Activated T-helper 1 cell treated with anti-CD3 and anti-CD28 coated beads, Interleukin-12 subunit alpha, Interleukin-12 subunit beta, Interleukin-2, Interleukin-4 antibody, amounts not matched to agents 30 ng/mL and 10 ng/mL and 1 ng/mL, durations not matched to agents 14 hours and 24 hours and 36 hours (primary cell): ENCODE measurements at regions of chr3 and their contacts with region 1.

Region 1: DNA sequence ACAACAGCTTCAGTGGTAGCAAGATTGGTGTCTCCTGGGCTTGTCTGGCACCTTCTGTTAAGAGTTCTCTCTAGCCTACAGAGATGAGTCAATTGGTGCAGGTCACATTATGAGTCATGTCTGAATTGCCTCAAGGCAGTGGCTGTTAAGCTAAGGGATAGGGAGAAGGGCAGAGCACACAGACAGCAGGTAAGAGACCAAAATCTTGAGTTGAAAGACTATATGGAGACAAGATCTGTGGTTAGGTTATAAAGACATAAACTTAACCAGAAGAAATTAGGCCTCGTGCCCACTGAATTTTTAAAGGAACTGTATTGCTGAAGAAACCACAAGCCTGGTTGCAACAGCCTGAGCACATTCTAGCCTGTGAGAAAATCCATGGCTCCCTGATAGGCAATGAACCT is 19.2 kb upstream of the KPNA1 start:
- DNase-seq: peak; percentile 46
- H3K4me3 Mint-ChIP-seq: no peak overlapping the region
- H3K27ac Mint-ChIP-seq: peak overlapping the region; percentile 80
- H3K4me1 Mint-ChIP-seq: peaks cover 60% of the 10 kb centered on the region
- H3K27me3 Mint-ChIP-seq: no peaks in the 10 kb centered on the region

Region 2: DNA sequence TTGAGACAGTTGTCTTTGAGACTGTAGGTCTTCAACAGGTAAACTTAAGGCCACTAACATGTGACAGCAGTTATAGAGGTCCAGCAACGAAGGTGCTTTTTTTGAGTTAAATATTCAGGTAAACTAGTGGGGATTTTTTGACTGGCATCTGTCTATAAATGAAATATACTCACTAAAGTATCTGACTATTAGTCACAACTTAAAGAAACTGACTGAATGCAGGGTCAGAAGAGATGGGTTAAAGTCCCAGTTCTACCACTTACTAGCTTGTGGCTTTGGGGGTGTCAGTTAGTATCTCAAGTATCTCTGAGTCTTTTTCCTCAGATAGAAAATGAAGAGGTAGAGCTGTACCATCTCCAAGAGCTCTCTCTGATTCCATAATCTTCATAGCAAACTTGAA is 168.9 kb before region 1 on chr3:
- intact Hi-C with region 1: loop called (anchors 1 kb)
- DNase-seq: no peak
- H3K4me3 Mint-ChIP-seq: peak overlapping the region; percentile 42
- H3K27ac Mint-ChIP-seq: peak overlapping the region; percentile 91
- H3K4me1 Mint-ChIP-seq: peaks cover 47% of the 10 kb centered on the region
- H3K27me3 Mint-ChIP-seq: no peaks in the 10 kb centered on the region

Region 3: GRCh38 chr3:122392868-122393844 is 140.8 kb before region 1 on chr3:
- intact Hi-C with region 1: loop called (anchors 1 kb)
- DNase-seq: no peak
- H3K4me3 Mint-ChIP-seq: no peak overlapping the region
- H3K27ac Mint-ChIP-seq: no peak overlapping the region
- H3K4me1 Mint-ChIP-seq: peaks cover 46% of the 10 kb centered on the region
- H3K27me3 Mint-ChIP-seq: no peaks in the 10 kb centered on the region

Region 4: GRCh38 chr3:122458992-122459391 is 74.9 kb before region 1 on chr3:
- intact Hi-C with region 1: loop called (anchors 1 kb)
- DNase-seq: no peak
- H3K4me3 Mint-ChIP-seq: no peak overlapping the region
- H3K27ac Mint-ChIP-seq: no peak overlapping the region
- H3K4me1 Mint-ChIP-seq: no peaks in the 10 kb centered on the region
- H3K27me3 Mint-ChIP-seq: no peaks in the 10 kb centered on the region

Region 5: DNA sequence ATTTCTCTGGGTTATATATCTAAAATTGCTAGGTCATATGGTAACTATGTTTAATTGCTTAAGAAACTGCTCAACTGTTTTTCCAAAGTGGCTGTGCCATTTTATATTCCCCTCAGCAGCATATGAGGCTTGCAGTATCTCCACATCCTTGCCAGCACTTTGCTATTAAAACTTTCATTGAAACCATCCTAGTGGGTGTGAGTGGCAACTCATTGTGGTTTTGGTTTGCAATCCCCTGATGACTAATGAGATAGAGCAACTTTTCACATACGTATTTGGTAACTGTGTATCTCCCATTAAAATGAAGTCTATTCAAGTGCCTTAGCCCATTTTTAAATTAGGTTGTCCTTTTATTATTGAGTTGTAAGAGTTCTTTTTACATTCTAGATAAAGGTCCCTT is 36.5 kb before region 1 on chr3:
- intact Hi-C with region 1: loop called (anchors 1 kb)
- DNase-seq: peak; percentile 14
- H3K4me3 Mint-ChIP-seq: peak overlapping the region; percentile 17
- H3K27ac Mint-ChIP-seq: no peak overlapping the region
- H3K4me1 Mint-ChIP-seq: peaks cover 43% of the 10 kb centered on the region
- H3K27me3 Mint-ChIP-seq: no peaks in the 10 kb centered on the region

Region 6: DNA sequence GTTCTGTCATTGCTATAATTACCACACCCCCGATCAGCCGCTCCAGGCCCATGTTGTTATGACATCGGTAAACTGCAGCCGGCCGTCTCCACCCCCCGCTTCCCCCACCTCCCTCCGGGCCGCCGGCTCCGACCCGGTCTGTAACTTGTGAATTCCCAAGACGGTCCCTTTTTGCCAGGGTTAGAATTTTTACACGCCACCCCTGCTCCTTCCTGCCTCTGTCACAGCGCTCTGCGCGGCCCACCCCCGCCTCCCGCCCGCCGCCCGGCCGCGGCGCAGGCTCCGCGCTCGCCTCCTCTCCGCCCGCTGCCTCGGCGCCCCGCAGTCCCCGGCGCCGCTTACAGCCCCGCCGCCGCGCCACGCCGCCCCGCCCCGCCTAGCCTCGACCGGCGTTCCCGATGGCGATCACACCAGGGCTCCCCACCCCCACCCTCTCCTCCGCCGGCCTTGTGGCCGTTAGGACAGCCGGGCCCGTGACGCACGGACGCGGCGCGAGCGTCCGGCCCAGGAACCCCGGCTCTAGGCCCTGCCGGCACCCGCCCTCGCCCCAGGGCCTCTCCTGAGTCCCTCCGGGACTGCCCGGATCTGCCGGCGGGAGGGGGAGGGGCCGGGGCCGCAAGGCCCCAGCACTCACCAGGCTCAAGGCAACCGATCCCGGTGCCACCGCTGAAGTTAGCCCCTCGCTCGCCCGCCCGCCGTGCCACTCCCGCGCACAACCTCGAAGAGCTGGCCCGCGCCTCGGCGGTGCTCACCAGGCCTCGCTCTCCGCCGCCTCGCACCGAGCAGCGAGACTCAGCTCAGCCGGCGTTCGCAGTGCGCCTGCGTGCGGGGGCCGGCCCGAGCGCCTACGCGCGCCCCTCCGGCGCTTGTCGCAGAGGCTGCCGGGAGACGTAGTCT is 19.6 kb before region 1 on chr3 and contains the start of gene KPNA1:
- intact Hi-C with region 1: loop called (anchors 1 kb)
- DNase-seq: peak; percentile 85
- H3K4me3 Mint-ChIP-seq: peak within 1 kb of the TSS; percentile 90
- H3K27ac Mint-ChIP-seq: peak within 1 kb of the TSS; percentile 92
- H3K4me1 Mint-ChIP-seq: peaks cover 46% of the 10 kb centered on the region
- H3K27me3 Mint-ChIP-seq: peaks cover 4% of the 10 kb centered on the region
- total RNA-seq, gene KPNA1: 81.7 and 88.2 TPM in 2 replicates

Region 7: GRCh38 chr3:122609798-122610559 is 76.0 kb after region 1 on chr3:
- intact Hi-C with region 1: loop called (anchors 1 kb)
- DNase-seq: peak; percentile 31
- H3K4me3 Mint-ChIP-seq: peak overlapping the region; percentile 58
- H3K27ac Mint-ChIP-seq: peak overlapping the region; percentile 89
- H3K4me1 Mint-ChIP-seq: peaks cover 20% of the 10 kb centered on the region
- H3K27me3 Mint-ChIP-seq: no peaks in the 10 kb centered on the region

Region 8: DNA sequence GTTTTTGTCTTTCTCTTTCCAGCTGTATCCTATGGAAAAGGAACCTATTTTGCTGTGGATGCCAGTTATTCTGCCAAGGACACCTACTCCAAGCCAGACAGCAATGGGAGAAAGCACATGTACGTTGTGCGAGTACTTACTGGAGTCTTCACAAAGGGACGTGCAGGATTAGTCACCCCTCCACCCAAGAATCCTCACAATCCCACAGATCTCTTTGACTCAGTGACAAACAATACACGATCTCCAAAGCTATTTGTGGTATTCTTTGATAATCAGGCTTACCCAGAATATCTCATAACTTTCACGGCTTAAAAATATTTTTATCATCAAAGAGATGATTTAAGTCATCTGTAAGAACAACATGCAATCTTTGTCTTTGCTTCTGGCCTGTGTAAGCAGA is 101.9 kb after region 1 on chr3:
- intact Hi-C with region 1: no loop called
- DNase-seq: no peak
- H3K4me3 Mint-ChIP-seq: no peak overlapping the region
- H3K27ac Mint-ChIP-seq: no peak overlapping the region
- H3K4me1 Mint-ChIP-seq: peaks cover 6% of the 10 kb centered on the region
- H3K27me3 Mint-ChIP-seq: no peaks in the 10 kb centered on the region